OCI-LY7 (cell line): ENCODE measurements at regions of chr10 and their contacts with region 1.

Region 1: DNA sequence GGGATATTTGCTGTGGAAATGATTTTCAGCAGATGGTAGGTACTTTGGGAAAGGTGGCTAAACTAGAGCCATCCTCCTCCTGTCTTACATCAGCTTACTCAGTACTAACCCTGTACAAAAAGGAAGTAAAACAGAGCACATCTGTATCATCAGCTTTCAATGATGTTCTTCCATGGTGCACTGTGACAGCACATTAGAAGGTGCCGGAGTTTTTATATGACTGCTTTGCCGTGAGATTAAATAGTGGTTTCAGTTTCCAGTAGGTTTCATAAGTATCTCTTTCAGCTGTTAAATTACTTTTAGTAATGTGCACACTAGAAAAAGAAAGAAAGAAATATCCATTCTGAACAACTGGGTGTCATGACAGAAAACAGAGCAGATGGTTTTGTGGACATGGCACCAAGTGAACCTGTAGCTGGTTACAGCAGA is 86.5 kb downstream of the ARID5B start:
- DNase-seq: peak; percentile 90
- H3K4me3 ChIP-seq: peak overlapping the region; percentile 55
- H3K27ac ChIP-seq: peak overlapping the region; percentile 99
- H3K4me1 ChIP-seq: peaks cover 98% of the 10 kb centered on the region
- CTCF ChIP-seq: no peak

Region 2: GRCh38 chr10:61847087-61847486 is 140.9 kb before region 1 on chr10:
- CTCF ChIA-PET with region 1: no interaction called
- POLR2A ChIA-PET with region 1: no interaction called
- intact Hi-C with region 1: no loop called
- DNase-seq: no peak
- H3K4me3 ChIP-seq: no peak overlapping the region
- H3K27ac ChIP-seq: no peak overlapping the region
- H3K4me1 ChIP-seq: no peaks in the 10 kb centered on the region
- CTCF ChIP-seq: no peak

Region 3: DNA sequence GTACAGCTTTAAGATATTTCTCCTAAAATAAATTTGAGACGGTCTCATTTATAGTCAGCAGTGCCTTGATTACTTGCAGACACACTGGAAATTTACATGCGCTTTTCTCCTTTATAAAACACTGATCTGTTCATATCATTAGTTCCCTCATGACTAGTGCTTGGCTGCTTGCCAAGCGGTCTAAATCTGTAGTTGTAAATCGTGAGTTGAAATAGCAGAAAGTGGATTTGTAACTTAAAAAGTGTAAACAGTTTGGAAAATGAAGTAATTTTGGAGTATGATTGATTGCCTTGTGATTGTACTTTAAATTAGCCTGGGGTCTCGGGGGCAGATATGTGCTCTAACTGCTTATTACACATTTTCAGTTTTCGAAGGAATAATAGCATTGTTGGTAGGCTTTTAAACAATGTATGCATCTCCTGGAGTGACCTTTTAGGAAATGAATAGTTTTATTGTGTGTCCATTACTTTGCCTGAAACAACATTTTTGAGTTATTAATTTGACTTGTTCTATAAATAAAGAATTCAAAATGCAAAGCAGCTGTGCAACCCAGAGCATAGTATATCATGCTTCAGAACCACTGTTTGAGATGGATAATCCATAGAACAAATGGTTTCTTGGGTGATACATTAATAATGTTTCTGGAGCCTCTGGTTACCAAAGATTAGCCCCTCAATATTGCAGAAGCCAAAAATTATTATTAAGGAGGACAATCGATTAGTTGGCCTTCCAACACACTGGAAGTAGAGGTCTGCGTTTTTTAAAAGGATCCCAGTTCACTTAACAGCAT is 13.2 kb before region 1 on chr10:
- CTCF ChIA-PET with region 1: interaction called, 3 read pairs
- POLR2A ChIA-PET with region 1: interaction called, 98 read pairs
- intact Hi-C with region 1: no loop called
- DNase-seq: peak; percentile 77
- H3K4me3 ChIP-seq: peak overlapping the region; percentile 50
- H3K27ac ChIP-seq: peak overlapping the region; percentile 86
- H3K4me1 ChIP-seq: peaks cover 80% of the 10 kb centered on the region
- CTCF ChIP-seq: no peak

Region 4: DNA sequence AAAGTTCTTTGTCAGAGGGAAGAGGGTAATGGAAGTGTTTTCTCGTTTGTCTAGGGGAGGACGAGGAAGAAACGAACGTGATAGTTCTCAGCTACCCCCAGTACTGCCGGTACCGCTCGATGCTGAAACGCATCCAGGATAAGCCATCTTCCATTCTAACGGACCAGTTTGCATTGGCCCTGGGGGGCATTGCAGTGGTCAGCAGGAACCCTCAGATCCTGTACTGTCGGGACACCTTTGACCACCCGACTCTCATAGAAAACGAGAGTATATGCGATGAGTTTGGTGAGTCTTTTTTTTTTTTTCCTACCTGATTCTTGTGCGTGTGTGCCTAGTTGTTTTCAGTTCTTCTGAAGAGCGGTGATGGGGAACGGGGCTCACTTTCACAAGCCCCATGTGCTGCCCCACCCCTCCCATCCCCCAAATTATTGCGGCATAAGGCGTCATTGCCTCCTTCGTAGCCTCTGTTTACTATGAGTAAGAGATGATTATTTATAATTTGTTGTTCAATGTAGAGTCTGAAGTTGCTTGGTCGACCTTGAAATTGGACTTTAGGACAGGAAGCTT is 12.2 kb after region 1 on chr10:
- CTCF ChIA-PET with region 1: interaction called, 5 read pairs
- POLR2A ChIA-PET with region 1: interaction called, 48 read pairs
- intact Hi-C with region 1: no loop called
- DNase-seq: peak; percentile 85
- H3K4me3 ChIP-seq: peak overlapping the region; percentile 65
- H3K27ac ChIP-seq: peak overlapping the region; percentile 83
- H3K4me1 ChIP-seq: peaks cover 98% of the 10 kb centered on the region
- CTCF ChIP-seq: no peak

Region 5: GRCh38 chr10:62019013-62019684 is 31.2 kb after region 1 on chr10:
- CTCF ChIA-PET with region 1: interaction called, 3 read pairs
- POLR2A ChIA-PET with region 1: interaction called, 11 read pairs
- intact Hi-C with region 1: no loop called
- DNase-seq: no peak
- H3K4me3 ChIP-seq: peak overlapping the region; percentile 21
- H3K27ac ChIP-seq: peak overlapping the region; percentile 43
- H3K4me1 ChIP-seq: peaks cover 76% of the 10 kb centered on the region
- CTCF ChIP-seq: no peak

Region 6: DNA sequence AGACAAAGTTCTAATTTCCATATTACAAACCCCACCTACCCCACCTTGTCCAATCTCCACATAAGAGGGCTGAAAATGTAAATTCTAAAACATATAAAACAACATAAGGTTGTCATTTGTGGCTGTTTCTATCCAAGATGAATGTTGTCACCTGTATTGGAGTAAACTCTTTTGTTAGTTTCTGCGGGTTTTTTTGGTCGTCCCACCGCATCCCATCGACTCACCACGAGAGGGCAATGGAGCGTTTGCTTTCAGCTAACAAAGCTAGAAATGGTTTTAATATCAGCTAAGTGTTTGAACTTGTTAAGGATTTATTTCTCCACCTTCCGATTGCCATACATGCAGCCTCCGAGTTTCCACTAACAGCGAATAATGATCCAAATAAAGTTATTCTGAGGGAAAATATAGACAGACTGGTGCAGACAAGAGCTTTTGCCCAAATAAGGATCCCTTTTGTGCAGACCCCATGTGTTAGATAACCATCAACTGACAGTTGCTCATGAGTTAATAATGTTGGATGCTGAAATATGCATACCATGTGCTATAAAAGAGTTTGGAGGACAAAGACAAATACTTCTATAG is 50.7 kb after region 1 on chr10:
- CTCF ChIA-PET with region 1: no interaction called
- POLR2A ChIA-PET with region 1: interaction called, 46 read pairs
- intact Hi-C with region 1: loop called (anchors 2 kb)
- DNase-seq: peak; percentile 85
- H3K4me3 ChIP-seq: peak overlapping the region; percentile 18
- H3K27ac ChIP-seq: peak overlapping the region; percentile 56
- H3K4me1 ChIP-seq: peaks cover 80% of the 10 kb centered on the region
- CTCF ChIP-seq: peak; percentile 98